ENCODE measurements at regions of chr1 and their contacts with region 1.

Region 1: GRCh38 chr1:154936555-154937084 is at the start of gene PMVK:
- DNase-seq: peak; percentile 97
- ATAC-seq: peak; percentile 90
- H3K4me3 Mint-ChIP-seq: peak within 1 kb of the TSS; percentile 88
- H3K27ac Mint-ChIP-seq: peak within 1 kb of the TSS; percentile 98
- H3K4me1 Mint-ChIP-seq: peaks cover 49% of the 10 kb centered on the region
- H3K27me3 Mint-ChIP-seq: no peaks in the 10 kb centered on the region
- CTCF ChIP-seq: no peak
- total RNA-seq, gene PMVK: 32.3 to 33.2 TPM

Region 2: DNA sequence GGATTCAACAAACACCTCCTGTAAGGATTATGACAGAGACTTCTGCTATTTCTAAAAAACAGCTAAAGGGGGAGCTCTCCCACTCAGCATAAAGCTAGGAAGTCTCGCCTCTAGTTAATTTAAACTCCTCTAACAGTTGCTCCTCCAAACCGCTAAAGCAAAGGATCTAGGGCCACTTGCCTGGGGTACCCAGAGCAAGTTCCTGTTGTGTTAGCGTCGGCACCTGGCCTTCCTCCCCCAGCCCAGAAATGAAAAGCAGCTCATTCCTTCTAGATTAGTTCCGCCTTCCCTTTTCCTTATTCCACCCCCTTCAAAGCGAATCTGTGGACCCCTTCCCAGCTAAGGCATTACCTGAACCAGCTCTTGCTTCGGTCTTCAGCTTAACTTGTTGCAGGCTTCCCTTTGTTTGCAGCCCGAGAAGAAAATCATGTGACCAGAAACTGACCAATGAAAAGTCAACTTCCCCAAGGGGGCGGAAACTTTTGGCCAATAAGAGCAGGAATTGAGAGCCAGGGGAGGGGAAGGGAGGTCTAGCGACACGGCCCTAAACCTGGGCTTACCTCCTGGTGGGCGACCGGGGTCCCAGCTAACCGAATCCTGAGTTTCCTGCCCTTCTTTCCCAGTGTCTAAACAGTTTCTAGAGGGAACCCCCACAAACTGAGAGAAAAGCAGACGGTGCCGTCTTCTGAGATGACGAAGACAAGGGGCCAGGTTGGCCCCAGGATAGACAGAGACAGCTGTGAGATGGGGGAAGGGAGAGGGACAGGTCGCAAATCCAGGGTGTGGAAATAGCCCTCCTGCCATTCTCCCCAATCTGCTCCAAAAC is 19.3 kb after region 1 on chr1 and contains the start of gene PBXIP1:
- CTCF ChIA-PET with region 1: interaction called, 49 read pairs
- POLR2A ChIA-PET with region 1: interaction called, 8 read pairs
- intact Hi-C with region 1: no loop called
- DNase-seq: peak; percentile 86
- ATAC-seq: peak; percentile 49
- H3K4me3 Mint-ChIP-seq: peak within 1 kb of the TSS; percentile 91
- H3K27ac Mint-ChIP-seq: peak within 1 kb of the TSS; percentile 97
- H3K4me1 Mint-ChIP-seq: peaks cover 69% of the 10 kb centered on the region
- H3K27me3 Mint-ChIP-seq: no peaks in the 10 kb centered on the region
- CTCF ChIP-seq: peak; percentile 26
- total RNA-seq, gene PBXIP1: 17.7 to 19.4 TPM